ENCODE measurements at regions of chr1 and their contacts with region 1.

Region 1: DNA sequence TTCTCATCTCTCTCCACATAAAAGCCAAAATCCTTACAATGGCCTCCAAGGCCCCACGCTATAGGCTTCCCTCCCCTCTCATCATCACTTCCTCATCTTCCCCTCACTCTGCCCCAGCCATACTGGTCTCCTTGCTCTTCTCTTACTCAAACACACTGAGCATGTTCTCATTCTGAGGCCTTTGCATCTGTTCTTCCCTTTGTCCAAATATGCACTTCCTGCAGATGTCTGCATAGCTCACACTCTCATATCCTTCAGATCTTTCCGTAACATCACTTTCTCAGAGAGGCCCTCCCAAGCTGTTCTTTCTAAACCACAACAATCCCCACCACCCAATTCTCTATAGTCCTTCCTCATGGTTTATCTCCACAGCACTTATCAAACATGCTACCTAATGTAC is 284.1 kb downstream of the HHIPL2 start:
- DNase-seq: no peak
- H3K4me3 ChIP-seq: no peak overlapping the region
- H3K27ac ChIP-seq: no peak overlapping the region
- H3K4me1 ChIP-seq: no peaks in the 10 kb centered on the region
- H3K27me3 ChIP-seq: no peaks in the 10 kb centered on the region
- CTCF ChIP-seq: no peak
- POLR2A ChIP-seq: no peak

Region 2: GRCh38 chr1:222195857-222196256 is 67.9 kb before region 1 on chr1:
- intact Hi-C with region 1: loop called (anchors 2 kb)
- DNase-seq: no peak
- H3K4me3 ChIP-seq: no peak overlapping the region
- H3K27ac ChIP-seq: no peak overlapping the region
- H3K4me1 ChIP-seq: no peaks in the 10 kb centered on the region
- H3K27me3 ChIP-seq: no peaks in the 10 kb centered on the region
- CTCF ChIP-seq: no peak
- POLR2A ChIP-seq: no peak

Region 3: GRCh38 chr1:222382171-222382570 is 118.4 kb after region 1 on chr1:
- intact Hi-C with region 1: no loop called
- DNase-seq: no peak
- H3K4me3 ChIP-seq: no peak overlapping the region
- H3K27ac ChIP-seq: no peak overlapping the region
- H3K4me1 ChIP-seq: no peaks in the 10 kb centered on the region
- H3K27me3 ChIP-seq: no peaks in the 10 kb centered on the region
- CTCF ChIP-seq: no peak
- POLR2A ChIP-seq: no peak

Measured in breast epithelium (tissue), 4 donors.